ENCODE measurements at regions of chr6 and their contacts with region 1.

Region 1: DNA sequence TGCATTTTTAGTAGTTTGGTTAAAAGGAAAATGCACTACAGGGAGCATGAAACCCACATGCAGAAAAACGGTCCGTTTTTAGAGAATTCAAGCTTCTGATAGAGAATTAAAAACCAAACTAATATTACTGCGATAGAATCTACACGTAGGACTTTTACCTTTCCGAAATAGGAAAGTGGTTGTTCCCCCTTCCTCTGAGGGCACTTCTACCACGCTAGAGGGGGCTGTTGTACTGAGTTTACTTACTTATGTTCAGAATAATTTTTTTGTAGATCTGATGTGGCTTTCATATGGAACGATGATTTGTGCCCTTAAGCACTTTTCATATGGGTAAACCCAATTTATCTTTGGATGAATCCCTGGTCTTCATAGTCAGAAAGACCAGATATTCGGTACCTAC is 264.3 kb upstream of the PLN start:
- DNase-seq: no peak
- ATAC-seq: peak; percentile 63
- H3K4me3 ChIP-seq: no peak overlapping the region
- H3K27ac ChIP-seq: no peak overlapping the region
- H3K4me1 ChIP-seq: peaks cover 8% of the 10 kb centered on the region
- H3K27me3 ChIP-seq: peaks cover 0 to 7% of the 10 kb centered on the region in 2 experiments; a peak in 1 of 4 replicates
- CTCF ChIP-seq: peak; percentile 49 to 65 (median 55)
- EP300 ChIP-seq: no peak
- POLR2A ChIP-seq: no peak
- RAD21 ChIP-seq: peak; percentile 68

Region 2: GRCh38 chr6:118509009-118509617 is 225.3 kb after region 1 on chr6:
- CTCF ChIA-PET with region 1: interaction called, 8 read pairs
- POLR2A ChIA-PET with region 1: no interaction called
- RAD21 ChIA-PET with region 1: interaction called, 4 read pairs
- SMC1A ChIA-PET with region 1: interaction called, 5 read pairs
- in situ Hi-C with region 1: no loop called
- intact Hi-C with region 1: loop called (anchors 1 kb)
- DNase-seq: no peak
- ATAC-seq: 0 out of 3 replicates have a peak, but pooled peaks have one; percentile 34
- H3K4me3 ChIP-seq: no peak overlapping the region
- H3K27ac ChIP-seq: no peak overlapping the region
- H3K4me1 ChIP-seq: no peaks in the 10 kb centered on the region
- H3K27me3 ChIP-seq: no peaks in the 10 kb centered on the region
- CTCF ChIP-seq: peak; percentile 54 to 59 (median 56); a peak in 5 of 6 replicates
- EP300 ChIP-seq: no peak
- POLR2A ChIP-seq: no peak
- RAD21 ChIP-seq: peak; percentile 75

Region 3: DNA sequence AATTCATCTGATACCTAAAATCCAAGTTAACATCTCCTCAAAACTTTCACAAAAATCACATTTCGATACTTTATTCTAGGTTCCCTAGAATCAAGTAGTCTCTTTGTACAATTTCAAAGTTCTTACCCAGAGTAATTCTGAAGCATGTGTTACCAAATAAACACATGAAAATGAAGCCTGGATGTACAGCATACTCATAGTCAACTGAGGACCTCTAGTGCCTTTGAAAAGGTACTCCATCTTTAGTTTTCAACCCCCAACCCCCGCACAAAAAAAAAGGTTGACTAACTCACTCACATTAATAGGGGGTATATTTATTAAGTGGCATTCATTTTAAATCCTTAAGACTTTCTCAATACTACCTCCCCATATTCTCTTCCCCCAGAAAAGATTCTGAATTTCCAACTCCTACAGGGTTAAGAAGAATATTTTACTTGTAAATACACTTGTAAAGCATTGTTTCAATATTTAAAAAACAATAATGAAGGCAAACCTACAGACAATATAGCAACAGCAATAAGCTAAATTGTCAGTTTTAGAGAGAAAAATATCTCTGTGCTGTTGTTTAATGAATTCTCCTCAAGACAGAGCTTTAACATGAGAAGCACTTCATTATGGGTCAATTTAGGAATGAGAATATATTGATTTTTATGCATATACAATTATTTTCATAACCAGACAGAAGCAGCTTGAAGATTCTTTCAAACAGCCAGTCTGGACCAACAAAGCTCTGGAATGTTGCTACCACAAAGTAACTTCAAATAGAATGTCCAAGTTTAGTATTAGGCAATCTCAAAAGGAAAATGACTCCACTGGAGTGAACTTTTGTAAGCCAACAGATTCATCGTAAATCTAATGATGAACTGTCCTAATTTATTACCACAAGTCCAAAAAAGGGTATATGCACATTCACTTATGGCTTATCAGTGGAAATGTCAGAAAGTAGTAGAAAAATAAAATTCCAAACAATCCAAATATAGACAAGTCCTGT is 267.6 kb after region 1 on chr6:
- CTCF ChIA-PET with region 1: interaction called, 4 read pairs
- POLR2A ChIA-PET with region 1: no interaction called
- RAD21 ChIA-PET with region 1: interaction called, 3 read pairs
- SMC1A ChIA-PET with region 1: interaction called, 5 read pairs
- in situ Hi-C with region 1: loop called (anchors 10 kb)
- intact Hi-C with region 1: loop called (anchors 1 kb)
- DNase-seq: no peak
- ATAC-seq: peak; percentile 93
- H3K4me3 ChIP-seq: no peak overlapping the region
- H3K27ac ChIP-seq: no peak overlapping the region
- H3K4me1 ChIP-seq: no peaks in the 10 kb centered on the region
- H3K27me3 ChIP-seq: no peaks in the 10 kb centered on the region
- CTCF ChIP-seq: peak; percentile 49 to 72 (median 52); a peak in 5 of 6 replicates
- EP300 ChIP-seq: no peak
- POLR2A ChIP-seq: no peak
- RAD21 ChIP-seq: peak; percentile 85

Region 4: GRCh38 chr6:118787724-118788423 is 504.1 kb after region 1 on chr6:
- CTCF ChIA-PET with region 1: no interaction called
- POLR2A ChIA-PET with region 1: no interaction called
- RAD21 ChIA-PET with region 1: no interaction called
- SMC1A ChIA-PET with region 1: no interaction called
- in situ Hi-C with region 1: loop called (anchors 10 kb)
- intact Hi-C with region 1: no loop called
- DNase-seq: no peak
- ATAC-seq: no peak
- H3K4me3 ChIP-seq: no peak overlapping the region
- H3K27ac ChIP-seq: no peak overlapping the region
- H3K4me1 ChIP-seq: no peaks in the 10 kb centered on the region
- H3K27me3 ChIP-seq: no peaks in the 10 kb centered on the region
- CTCF ChIP-seq: no peak
- EP300 ChIP-seq: no peak
- POLR2A ChIP-seq: no peak
- RAD21 ChIP-seq: no peak